ENCODE measurements at regions of chr18 and their contacts with region 1.

Region 1: DNA sequence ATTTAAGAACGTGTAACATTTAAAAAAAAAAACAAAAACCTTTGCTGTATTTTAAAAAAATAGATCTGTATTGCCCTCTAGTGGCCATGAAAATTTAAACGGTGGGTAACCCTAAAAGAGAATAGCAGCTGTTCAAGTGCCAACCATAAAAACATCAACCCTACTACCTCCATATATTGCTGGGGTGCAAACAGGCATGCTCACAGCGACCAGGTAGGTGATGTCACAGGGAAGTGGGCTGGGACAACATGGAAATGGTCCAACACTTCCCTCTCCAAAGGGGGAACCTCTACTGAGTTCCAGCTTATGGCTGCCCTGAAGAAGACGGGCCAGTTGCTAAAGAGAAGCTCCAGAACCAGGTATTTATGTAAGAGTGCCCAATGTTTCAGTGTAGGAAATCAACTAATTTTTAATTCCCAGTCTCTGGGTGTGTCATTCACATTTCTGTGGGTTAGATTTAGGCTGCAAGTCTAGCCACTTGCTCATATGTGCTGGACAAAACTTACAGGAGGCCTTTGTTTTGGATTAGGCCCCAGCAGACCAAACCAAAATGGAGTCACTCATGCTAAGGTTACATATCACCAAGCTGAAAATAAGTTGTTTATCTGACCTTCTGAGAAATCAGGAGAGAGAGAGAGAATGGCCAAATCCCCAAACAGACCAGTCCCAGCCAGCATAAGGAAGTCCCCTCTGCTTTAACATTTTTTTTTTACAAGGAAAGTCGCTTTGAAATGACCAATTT is 54.5 kb downstream of the SKA1 start:
- DNase-seq: no peak
- ATAC-seq: no peak

Region 2: GRCh38 chr18:49476664-49477411 is 952.5 kb before region 1 on chr18:
- intact Hi-C with region 1: no loop called
- DNase-seq: peak; percentile 53
- ATAC-seq: peak; percentile 37

Region 3: GRCh38 chr18:50009773-50010335 is 419.5 kb before region 1 on chr18:
- intact Hi-C with region 1: loop called (anchors 5 kb)
- DNase-seq: no peak
- ATAC-seq: peak; percentile 83

Region 4: DNA sequence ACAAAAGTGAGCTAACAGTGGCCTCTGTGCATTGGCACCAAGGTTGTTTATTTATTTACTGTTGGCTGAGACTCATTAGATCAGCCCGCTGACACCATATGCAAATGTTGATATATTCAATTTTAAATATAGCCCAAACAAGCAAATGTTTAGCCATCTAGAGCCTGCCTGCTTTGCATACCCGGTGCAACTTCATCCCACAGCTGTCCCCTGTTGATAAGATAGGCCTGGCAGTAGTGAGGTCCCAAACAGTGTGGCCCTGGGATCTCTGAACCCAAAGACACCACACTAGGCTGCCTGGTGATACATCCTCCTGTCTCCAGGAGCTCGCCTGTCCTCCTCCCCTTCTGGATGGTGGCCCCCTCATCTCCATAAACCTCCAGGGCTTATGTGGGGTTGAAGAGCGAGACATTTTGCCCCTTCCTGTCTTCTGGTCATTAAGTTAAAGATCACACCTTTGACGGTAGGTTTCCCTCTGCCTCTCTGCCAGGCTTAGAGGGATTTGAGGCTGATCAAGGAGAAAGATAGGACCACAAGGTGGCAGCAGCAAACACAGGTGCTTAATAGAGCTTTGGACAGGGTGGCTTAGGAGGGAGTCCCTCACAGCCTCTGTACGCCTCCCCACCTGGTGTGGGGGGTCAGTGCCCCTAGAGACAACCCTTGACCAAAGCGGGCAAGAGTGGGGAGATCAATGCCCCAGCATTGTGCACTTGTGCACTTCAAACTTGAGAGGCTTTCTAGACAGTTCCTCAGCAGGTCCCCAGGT is 210.8 kb before region 1 on chr18:
- intact Hi-C with region 1: loop called (anchors 10 kb)
- DNase-seq: no peak
- ATAC-seq: peak; percentile 58

Region 5: GRCh38 chr18:50757358-50757757 is 328.0 kb after region 1 on chr18:
- intact Hi-C with region 1: no loop called
- DNase-seq: no peak
- ATAC-seq: no peak